Dendritic cell treated with granulocyte-macrophage colony-stimulating factor and Interleukin-4, amounts not matched to agents 40 ng/mL and 50 ng/mL, for 4 days (primary cell): ENCODE measurements at regions of chr2 and their contacts with region 1.

Region 1: DNA sequence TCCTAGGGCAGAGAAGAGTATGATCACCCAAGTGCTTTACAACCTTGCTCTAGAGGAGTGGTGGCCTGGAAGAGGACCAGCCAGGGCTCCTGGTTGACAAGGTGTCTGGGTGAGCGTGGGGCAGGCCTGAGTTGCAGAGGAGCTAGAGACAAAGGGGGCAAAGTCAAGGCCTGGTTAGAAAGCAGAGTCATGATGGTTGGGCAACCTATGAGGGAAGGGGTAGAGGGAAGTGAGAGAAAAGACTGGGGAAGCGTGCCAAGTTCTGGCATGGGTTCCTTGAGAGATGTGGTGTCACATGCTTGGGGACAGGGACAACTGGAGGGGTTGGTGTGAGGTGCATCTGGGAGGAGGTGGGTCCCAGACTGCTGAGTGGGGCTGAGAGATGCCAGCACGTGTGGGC is 13.5 kb downstream of the ZFP36L2 start:
- H3K4me3 Mint-ChIP-seq: no peak overlapping the region
- H3K27ac Mint-ChIP-seq: peak overlapping the region; percentile 89
- H3K4me1 Mint-ChIP-seq: peaks cover 50% of the 10 kb centered on the region
- H3K27me3 Mint-ChIP-seq: peaks cover under 1% of the 10 kb centered on the region

Region 2: GRCh38 chr2:43169987-43170386 is 42.9 kb before region 1 on chr2:
- intact Hi-C with region 1: loop called (anchors 1 kb)
- H3K4me3 Mint-ChIP-seq: no peak overlapping the region
- H3K27ac Mint-ChIP-seq: peak overlapping the region; percentile 88
- H3K4me1 Mint-ChIP-seq: peaks cover 83% of the 10 kb centered on the region
- H3K27me3 Mint-ChIP-seq: peaks cover 4% of the 10 kb centered on the region

Region 3: GRCh38 chr2:43180903-43181302 is 32.0 kb before region 1 on chr2:
- intact Hi-C with region 1: no loop called
- H3K4me3 Mint-ChIP-seq: no peak overlapping the region
- H3K27ac Mint-ChIP-seq: peak overlapping the region; percentile 35
- H3K4me1 Mint-ChIP-seq: peaks cover 59% of the 10 kb centered on the region
- H3K27me3 Mint-ChIP-seq: peaks cover 6% of the 10 kb centered on the region